ENCODE measurements at regions of chr9 and their contacts with region 1.

Region 1: DNA sequence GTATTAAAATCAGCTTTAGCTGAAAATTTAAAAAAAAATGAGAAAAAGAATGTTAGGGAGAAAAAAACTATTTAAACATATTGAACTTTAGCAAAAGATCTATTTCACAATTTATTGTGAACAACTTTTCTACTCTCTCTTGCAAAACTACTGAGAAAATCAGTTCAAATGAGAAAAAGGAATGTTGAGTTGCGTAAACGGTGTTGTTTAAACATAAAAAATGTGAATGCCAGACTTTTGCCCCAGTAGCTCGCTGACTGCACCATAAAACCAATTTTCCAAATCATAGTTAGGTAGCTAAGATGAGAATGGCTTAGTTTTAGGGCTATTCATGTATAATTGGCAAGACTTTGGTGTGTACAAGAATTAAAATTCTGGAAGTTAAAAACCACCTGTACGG is 13.4 kb upstream of the RAD23B start:
- DNase-seq: no peak
- H3K4me3 ChIP-seq: no peak overlapping the region
- H3K27ac ChIP-seq: no peak overlapping the region
- H3K4me1 ChIP-seq: peaks cover 0 to 3% (median 0%) of the 10 kb centered on the region in 4 donors
- H3K27me3 ChIP-seq: no peaks in the 10 kb centered on the region
- CTCF ChIP-seq: no peak
- EP300 ChIP-seq: no peak
- POLR2A ChIP-seq: no peak

Region 2: DNA sequence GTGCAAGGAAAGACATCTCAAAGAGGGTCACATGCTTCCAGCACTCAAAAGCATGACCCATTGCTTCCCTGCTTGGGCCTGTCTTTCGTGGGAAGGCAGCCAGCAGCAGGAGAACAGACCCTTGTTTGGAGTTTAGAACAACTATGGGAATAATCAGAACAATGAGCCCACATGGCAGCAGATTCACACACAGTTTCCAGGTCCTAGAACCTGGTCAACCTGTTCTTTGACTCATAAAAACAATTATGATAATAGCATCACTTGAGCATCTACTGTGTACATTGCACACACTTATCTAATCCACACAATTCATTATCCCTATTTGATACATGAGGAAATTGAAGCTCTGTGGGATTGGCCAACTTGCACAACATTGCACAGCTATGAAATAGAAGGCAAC is 178.1 kb after region 1 on chr9:
- in situ Hi-C with region 1: no loop called
- intact Hi-C with region 1: no loop called
- DNase-seq: no peak
- H3K4me3 ChIP-seq: no peak overlapping the region
- H3K27ac ChIP-seq: peak overlapping the region in 1 of 4 donors; percentile 21
- H3K4me1 ChIP-seq: no peaks in the 10 kb centered on the region
- H3K27me3 ChIP-seq: no peaks in the 10 kb centered on the region
- CTCF ChIP-seq: no peak
- EP300 ChIP-seq: no peak
- POLR2A ChIP-seq: no peak

Region 3: DNA sequence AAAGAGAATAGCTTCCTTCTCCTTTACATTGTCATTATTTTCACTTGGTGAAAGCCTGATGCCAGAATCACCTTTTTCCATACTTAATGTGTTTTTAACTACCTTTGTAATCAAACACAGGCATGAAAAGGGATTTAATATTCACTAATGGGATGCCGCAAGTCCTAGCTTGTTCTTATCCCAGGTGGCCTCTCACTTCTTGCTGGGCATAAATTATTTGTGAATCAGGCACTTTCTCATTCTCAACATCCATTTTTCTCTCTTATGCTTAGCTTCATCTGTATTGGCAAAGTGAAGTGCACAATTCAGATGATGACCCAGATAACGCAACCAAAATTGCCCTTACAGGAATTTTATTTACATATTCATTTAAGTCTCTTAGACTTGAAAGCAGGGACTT is 1575.2 kb after region 1 on chr9:
- in situ Hi-C with region 1: no loop called
- intact Hi-C with region 1: loop called (anchors 5 kb)
- DNase-seq: no peak
- H3K4me3 ChIP-seq: no peak overlapping the region
- H3K27ac ChIP-seq: no peak overlapping the region
- H3K4me1 ChIP-seq: no peaks in the 10 kb centered on the region
- H3K27me3 ChIP-seq: no peaks in the 10 kb centered on the region
- CTCF ChIP-seq: no peak
- EP300 ChIP-seq: no peak
- POLR2A ChIP-seq: no peak

Measured in transverse colon (tissue), 4 donors.